Mammary epithelial cell (primary cell): ENCODE measurements at regions of chr18 and their contacts with region 1.

Region 1: GRCh38 chr18:30177056-30177455 is 865.5 kb downstream of the DSC3 start:
- DNase-seq: peak; percentile 14
- H3K4me3 ChIP-seq: no peak overlapping the region
- H3K27ac ChIP-seq: no peak overlapping the region
- H3K4me1 ChIP-seq: no peaks in the 10 kb centered on the region
- H3K27me3 ChIP-seq: no peaks in the 10 kb centered on the region
- CTCF ChIP-seq: no peak

Region 2: GRCh38 chr18:30094556-30094955 is 82.5 kb before region 1 on chr18:
- CTCF ChIA-PET with region 1: no interaction called
- dilution Hi-C with region 1: no loop called
- in situ Hi-C with region 1: no loop called
- intact Hi-C with region 1: no loop called
- DNase-seq: peak; percentile 9
- H3K4me3 ChIP-seq: no peak overlapping the region
- H3K27ac ChIP-seq: no peak overlapping the region
- H3K4me1 ChIP-seq: no peaks in the 10 kb centered on the region
- H3K27me3 ChIP-seq: no peaks in the 10 kb centered on the region
- CTCF ChIP-seq: no peak

Region 3: DNA sequence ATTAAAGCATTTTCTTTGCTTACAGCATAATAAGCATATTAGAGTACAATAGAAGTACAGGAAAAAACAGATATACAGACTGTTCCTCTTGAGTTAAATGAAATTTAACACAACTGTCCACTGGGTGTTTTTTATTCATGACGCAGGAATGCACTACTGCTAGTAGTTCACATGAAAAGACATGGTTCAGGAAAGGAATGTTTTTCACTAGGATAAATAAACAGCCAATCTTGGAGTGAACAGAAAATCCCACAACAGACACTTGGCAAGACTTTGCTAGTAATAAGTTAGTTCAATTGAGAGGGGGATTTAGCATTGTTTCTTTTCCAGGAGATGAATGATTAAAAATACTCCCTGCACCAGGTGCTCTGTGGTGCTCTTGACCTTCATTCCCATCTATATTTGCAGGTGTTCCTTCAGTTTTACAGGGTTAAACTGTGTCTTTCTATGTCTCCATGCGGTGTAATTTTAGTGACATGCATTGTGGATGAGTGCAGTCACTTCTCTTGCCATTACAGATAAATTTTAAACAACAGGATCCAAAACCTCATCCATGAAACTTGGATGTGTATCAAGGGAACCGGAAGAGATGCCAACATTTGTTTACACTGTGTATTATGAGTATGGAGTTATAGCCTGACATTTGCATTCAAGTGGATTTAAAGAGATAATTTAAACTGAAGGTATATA is 68.9 kb after region 1 on chr18:
- CTCF ChIA-PET with region 1: no interaction called
- dilution Hi-C with region 1: loop called (anchors 5 kb)
- in situ Hi-C with region 1: no loop called
- intact Hi-C with region 1: no loop called
- DNase-seq: no peak
- H3K4me3 ChIP-seq: no peak overlapping the region
- H3K27ac ChIP-seq: no peak overlapping the region
- H3K4me1 ChIP-seq: no peaks in the 10 kb centered on the region
- H3K27me3 ChIP-seq: no peaks in the 10 kb centered on the region
- CTCF ChIP-seq: no peak